ENCODE measurements at regions of chr19 and their contacts with region 1.

Region 1: DNA sequence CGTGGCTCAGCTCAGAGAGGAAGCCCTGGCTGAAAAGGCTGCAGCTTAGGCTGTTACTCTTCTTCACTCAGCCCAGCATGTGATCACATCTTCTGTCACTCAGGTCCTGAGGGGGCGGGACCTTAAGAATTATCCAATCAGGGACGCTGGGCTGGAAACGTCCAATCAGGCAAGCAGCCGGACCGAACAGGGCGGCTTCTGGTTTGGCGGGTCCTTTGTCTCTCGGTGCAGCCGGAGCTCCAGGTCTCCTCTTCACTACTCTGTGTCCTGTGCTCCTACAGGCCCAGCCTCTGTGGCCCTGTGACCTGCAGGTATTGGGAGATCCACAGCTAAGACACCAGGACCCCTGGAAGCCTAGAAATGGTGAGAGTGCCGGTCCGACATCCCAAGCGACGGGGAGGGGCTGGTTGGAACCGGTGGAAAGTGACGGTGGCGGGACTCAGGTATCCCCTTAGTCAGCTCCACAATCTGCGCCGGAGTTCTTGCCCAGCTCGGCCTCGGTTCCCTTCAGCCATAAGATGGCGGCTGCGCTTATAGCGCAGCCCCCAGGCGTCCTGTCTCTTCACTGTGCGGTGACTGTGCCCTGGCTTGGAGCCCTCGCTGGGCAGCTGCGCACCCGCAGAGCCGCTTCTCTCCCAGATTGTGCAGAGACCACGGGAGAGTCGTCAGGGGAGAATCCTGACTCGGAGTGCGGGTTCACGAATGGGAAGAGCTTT is at the start of gene ZNF93:
- DNase-seq: peak; percentile 85
- H3K4me3 Mint-ChIP-seq: peak within 1 kb of the TSS; percentile 85
- H3K27ac Mint-ChIP-seq: peak within 1 kb of the TSS; percentile 62
- H3K4me1 Mint-ChIP-seq: peaks cover 9% of the 10 kb centered on the region
- H3K27me3 Mint-ChIP-seq: no peaks in the 10 kb centered on the region
- CTCF ChIP-seq: no peak
- total RNA-seq, gene ZNF93: 6.5 and 6.9 TPM in 2 replicates

Region 2: GRCh38 chr19:19788015-19788414 is 112.9 kb before region 1 on chr19:
- CTCF ChIA-PET with region 1: no interaction called
- intact Hi-C with region 1: no loop called
- DNase-seq: no peak
- H3K4me3 Mint-ChIP-seq: no peak overlapping the region
- H3K27ac Mint-ChIP-seq: no peak overlapping the region
- H3K4me1 Mint-ChIP-seq: no peaks in the 10 kb centered on the region
- H3K27me3 Mint-ChIP-seq: no peaks in the 10 kb centered on the region
- CTCF ChIP-seq: no peak

Region 3: GRCh38 chr19:20051841-20052768 is 151.2 kb after region 1 on chr19:
- CTCF ChIA-PET with region 1: no interaction called
- intact Hi-C with region 1: no loop called
- DNase-seq: peak; percentile 71
- H3K4me3 Mint-ChIP-seq: peak overlapping the region; percentile 58
- H3K27ac Mint-ChIP-seq: no peak overlapping the region
- H3K4me1 Mint-ChIP-seq: no peaks in the 10 kb centered on the region
- H3K27me3 Mint-ChIP-seq: no peaks in the 10 kb centered on the region
- CTCF ChIP-seq: no peak

Region 4: GRCh38 chr19:21767065-21767800 is 1866.3 kb after region 1 on chr19 and contains the start of gene ZNF100:
- CTCF ChIA-PET with region 1: no interaction called
- intact Hi-C with region 1: loop called (anchors 10 kb)
- DNase-seq: peak; percentile 84
- H3K4me3 Mint-ChIP-seq: peak within 1 kb of the TSS; percentile 87
- H3K27ac Mint-ChIP-seq: peak within 1 kb of the TSS; percentile 87
- H3K4me1 Mint-ChIP-seq: no peaks in the 10 kb centered on the region
- H3K27me3 Mint-ChIP-seq: no peaks in the 10 kb centered on the region
- CTCF ChIP-seq: no peak
- total RNA-seq, gene ZNF100: 9.1 and 9.4 TPM in 2 replicates